ENCODE measurements at regions of chr11 and their contacts with region 1.

Region 1: GRCh38 chr11:72724851-72725730 is 27.1 kb downstream of the ARAP1 start:
- DNase-seq: peak; percentile 54 to 94 (median 75)
- ATAC-seq: peak in 3 of 4 experiments; percentile 17 to 27 (median 18)
- H3K4me3 ChIP-seq: no peak overlapping the region
- H3K4me3 Mint-ChIP-seq: peak overlapping the region in 2 of 3 donors; percentile 15 to 62
- H3K27ac ChIP-seq: peak overlapping the region; percentile 37
- H3K27ac Mint-ChIP-seq: peak overlapping the region; percentile 84 to 85
- H3K4me1 ChIP-seq: peaks cover 16 to 46% of the 10 kb centered on the region in 2 experiments
- H3K4me1 Mint-ChIP-seq: peaks cover 45 to 66% (median 46%) of the 10 kb centered on the region in 3 donors
- H3K27me3 ChIP-seq: no peaks in the 10 kb centered on the region
- H3K27me3 Mint-ChIP-seq: no peaks in the 10 kb centered on the region

Region 2: DNA sequence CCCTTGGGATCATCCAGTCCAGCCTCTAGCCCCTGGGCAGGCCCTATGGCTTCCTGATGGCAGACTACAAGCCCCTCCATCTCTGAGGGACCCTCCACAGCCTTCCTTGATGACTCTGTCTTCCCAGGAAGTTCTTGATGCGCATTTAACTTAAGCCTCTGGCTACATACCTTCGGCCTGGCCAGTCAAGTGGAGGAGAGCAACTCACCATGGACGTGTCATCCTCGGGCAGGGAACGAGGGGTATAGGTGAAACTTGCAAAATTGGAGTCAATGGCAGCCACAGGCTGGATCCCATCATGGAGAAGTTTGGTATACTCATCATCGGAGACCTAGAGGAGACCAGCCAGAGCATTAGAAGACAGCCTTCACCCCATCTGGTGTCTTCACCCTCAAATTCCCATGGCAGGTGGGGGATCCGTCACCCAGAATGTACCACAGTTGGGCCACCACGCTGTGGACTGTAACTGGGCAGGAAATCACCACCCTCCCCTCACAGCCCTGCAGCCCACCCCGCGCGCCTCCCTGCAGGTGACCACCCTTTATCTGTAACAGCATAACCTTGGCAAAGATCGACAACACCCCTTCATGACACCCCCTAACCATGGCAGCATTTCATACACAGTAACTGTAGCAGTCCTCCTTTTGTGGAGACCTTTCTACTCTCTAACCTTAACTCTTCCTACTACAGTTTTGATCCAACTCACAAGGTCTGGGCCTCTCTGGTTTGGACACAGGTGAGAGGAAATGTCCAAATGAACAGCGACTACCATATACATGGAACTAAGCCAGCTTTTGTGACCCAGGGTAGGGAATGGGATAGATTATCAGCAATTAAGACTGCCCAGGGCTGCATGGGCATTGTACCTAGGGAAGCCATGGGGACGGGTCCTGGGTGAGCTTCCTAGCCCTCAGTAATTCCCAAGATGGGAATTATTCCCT is 142.6 kb before region 1 on chr11:
- CTCF ChIA-PET with region 1: no interaction called
- POLR2A ChIA-PET with region 1: interaction called in 1 of 2 experiments, 10 read pairs
- DNase-seq: no peak
- ATAC-seq: no peak
- H3K4me3 ChIP-seq: no peak overlapping the region
- H3K4me3 Mint-ChIP-seq: peak overlapping the region in 1 of 3 donors; percentile 80
- H3K27ac ChIP-seq: no peak overlapping the region
- H3K27ac Mint-ChIP-seq: no peak overlapping the region
- H3K4me1 ChIP-seq: peaks cover 3 to 23% of the 10 kb centered on the region in 2 experiments
- H3K4me1 Mint-ChIP-seq: peaks cover 16 to 21% (median 19%) of the 10 kb centered on the region in 3 donors
- H3K27me3 ChIP-seq: peaks cover 0 to 29% of the 10 kb centered on the region in 2 experiments
- H3K27me3 Mint-ChIP-seq: peaks cover 6 to 10% of the 10 kb centered on the region in 2 donors

Region 3: GRCh38 chr11:72736452-72737069 is 11.5 kb after region 1 on chr11:
- CTCF ChIA-PET with region 1: interaction called in 1 of 2 experiments, 14 read pairs
- POLR2A ChIA-PET with region 1: no interaction called
- DNase-seq: peak; percentile 34 to 89 (median 79)
- ATAC-seq: peak; percentile 83 to 90 (median 88)
- H3K4me3 ChIP-seq: peak overlapping the region in 1 of 2 donors; percentile 12
- H3K4me3 Mint-ChIP-seq: peak overlapping the region; percentile 60 to 70 (median 68)
- H3K27ac ChIP-seq: peak overlapping the region; percentile 92
- H3K27ac Mint-ChIP-seq: peak overlapping the region; percentile 97 to 99
- H3K4me1 ChIP-seq: peaks cover 16 to 62% of the 10 kb centered on the region in 2 experiments
- H3K4me1 Mint-ChIP-seq: peaks cover 61 to 65% (median 61%) of the 10 kb centered on the region in 3 donors
- H3K27me3 ChIP-seq: no peaks in the 10 kb centered on the region
- H3K27me3 Mint-ChIP-seq: no peaks in the 10 kb centered on the region

Region 4: DNA sequence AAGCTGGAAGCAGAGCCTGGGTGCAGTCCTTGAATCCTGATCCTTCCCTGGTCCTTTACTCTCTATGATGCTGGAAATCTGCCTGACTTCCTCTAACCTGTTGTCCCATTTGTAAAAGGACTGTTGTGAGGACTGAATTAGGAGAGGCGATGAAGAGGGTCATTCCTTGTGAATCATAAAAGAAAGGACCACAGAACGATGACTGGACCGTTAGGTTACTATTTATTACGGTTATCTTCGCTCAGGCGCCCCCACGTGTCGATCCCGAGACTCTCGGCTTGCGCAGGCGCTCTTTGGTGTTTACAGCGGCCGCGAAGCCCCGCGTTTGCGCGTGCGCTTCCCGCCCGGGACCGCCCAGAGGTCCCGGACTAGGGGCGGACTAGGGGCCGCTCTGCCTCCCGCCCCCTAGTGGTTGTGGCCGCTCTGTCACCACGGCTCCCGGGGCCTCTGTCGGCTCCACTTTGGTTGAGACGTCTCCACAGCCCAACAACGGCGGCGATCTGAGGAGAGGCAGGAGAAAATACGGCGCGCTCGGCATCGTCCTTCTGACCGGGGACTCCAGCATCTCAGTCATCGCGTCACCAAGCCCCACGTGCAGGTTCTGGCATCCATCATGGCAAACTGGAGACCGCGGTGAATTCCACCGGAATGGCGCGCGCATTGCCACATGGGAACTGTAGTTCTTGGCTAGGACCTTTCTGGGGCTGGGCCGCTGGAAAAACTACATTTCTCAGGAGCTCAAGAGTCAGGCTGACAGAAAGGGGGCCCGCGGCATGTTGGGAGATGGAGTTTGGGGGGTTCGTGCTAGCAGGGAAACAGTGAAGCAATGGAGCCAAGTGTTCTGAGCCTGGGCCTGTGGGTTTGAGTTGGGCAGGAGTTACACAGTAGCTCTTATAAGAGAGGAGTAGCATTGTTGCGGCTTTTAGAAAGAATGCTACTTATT is 68.6 kb after region 1 on chr11 and contains the start of gene STARD10:
- CTCF ChIA-PET with region 1: interaction called, 15 to 38 read pairs
- POLR2A ChIA-PET with region 1: interaction called, 3 to 16 read pairs
- DNase-seq: peak; percentile 87 to 98 (median 93)
- ATAC-seq: peak; percentile 92 to 95 (median 94)
- H3K4me3 ChIP-seq: peak within 1 kb of the TSS; percentile 82 to 85
- H3K4me3 Mint-ChIP-seq: peak within 1 kb of the TSS; percentile 91 to 98 (median 97)
- H3K27ac ChIP-seq: peak within 1 kb of the TSS; percentile 99
- H3K27ac Mint-ChIP-seq: peak within 1 kb of the TSS; percentile 99 to 100
- H3K4me1 ChIP-seq: peaks cover 6 to 23% of the 10 kb centered on the region in 2 experiments
- H3K4me1 Mint-ChIP-seq: peaks cover 23 to 26% (median 26%) of the 10 kb centered on the region in 3 donors
- H3K27me3 ChIP-seq: no peaks in the 10 kb centered on the region
- H3K27me3 Mint-ChIP-seq: no peaks in the 10 kb centered on the region
- total RNA-seq, gene STARD10: 11.1 to 24.9 (median 19.1) TPM

Region 5: DNA sequence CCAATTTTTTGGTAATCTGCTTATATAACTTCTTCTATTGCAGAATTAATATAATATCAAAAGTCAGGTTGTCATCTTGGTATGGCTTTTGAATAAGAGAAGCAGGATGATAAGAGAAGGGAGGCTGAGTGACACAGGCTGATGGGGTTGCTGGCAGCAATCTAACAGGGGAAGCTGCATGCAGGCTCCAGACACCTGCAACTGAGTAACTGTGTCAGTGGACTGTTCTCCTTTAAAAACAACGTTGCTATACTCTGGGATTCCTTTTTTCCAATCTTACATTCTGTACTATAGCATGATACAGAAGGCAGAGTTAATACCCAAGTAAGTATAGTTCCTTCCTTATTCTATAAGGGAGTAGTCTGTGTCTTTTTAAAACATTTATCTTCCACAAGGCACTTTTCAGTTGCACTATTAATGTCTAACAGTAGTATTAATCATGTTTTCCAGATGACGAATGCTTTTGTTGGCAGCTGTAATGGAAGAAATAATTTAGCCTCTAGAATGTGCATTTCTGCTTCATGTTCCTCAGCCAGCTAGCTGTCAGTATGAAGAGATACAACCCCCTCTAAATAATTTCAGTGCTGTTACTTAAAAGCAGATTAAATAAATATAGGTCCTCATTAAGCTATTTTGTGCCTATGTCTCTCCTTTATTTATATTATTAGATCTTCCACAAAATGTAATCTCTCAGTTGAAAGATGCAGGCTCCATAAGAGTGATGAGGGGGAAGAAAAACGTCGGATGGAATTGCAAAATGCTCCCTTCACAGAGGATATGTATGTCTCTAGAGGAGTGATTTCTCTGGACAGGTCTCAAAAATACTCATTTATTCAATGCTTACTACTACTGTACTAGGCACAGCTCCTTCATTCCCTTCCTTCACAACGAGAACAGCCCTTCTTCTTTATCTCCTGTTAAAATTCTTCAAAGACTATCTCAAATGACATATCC is 139.9 kb after region 1 on chr11:
- CTCF ChIA-PET with region 1: no interaction called
- POLR2A ChIA-PET with region 1: no interaction called
- DNase-seq: no peak
- ATAC-seq: no peak
- H3K4me3 ChIP-seq: no peak overlapping the region
- H3K4me3 Mint-ChIP-seq: no peak overlapping the region
- H3K27ac ChIP-seq: no peak overlapping the region
- H3K27ac Mint-ChIP-seq: peak overlapping the region in 1 of 2 donors; percentile 40
- H3K4me1 ChIP-seq: peaks cover 3% of the 10 kb centered on the region in 2 experiments
- H3K4me1 Mint-ChIP-seq: peaks cover 8 to 17% (median 12%) of the 10 kb centered on the region in 3 donors
- H3K27me3 ChIP-seq: no peaks in the 10 kb centered on the region
- H3K27me3 Mint-ChIP-seq: no peaks in the 10 kb centered on the region

Region 6: DNA sequence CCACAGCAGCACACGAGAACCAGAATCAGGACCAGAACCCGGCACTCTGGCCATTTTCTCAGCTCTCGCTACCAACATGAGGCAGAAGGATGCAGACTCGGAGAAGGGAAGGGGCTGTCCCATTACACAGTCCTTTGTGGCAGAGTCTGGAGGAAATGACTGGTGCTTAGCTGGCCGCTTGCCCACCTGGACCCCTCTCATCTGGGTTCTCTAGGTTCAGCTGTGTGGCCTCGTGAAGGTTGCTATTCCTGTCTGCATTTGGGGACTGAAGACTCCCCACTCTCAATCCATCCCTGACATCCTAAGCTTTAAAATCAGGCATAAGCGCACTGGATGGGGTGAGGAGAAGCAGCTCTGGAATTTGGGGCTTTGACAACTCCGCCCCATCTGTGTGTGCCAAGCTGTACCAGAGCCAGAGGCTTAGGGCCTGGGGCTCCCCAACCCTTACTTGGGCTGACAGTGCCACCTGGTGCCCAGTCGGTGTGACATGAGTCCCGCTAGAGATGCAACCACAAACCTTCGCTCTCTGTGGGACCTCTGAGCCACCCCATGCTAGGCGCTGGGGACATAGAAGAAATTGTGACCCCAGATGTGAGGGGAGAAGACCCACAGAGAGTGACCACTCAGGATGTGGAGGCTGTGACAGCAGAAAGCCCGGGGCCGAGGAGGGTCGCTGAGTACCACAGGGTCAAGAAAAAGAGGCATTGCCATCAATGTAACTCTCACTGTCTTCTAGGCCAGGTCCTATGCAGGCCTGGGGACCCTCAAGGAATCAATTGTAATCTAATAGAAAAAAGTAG is 452.9 kb after region 1 on chr11:
- CTCF ChIA-PET with region 1: interaction called, 4 to 11 read pairs
- POLR2A ChIA-PET with region 1: no interaction called
- DNase-seq: peak; percentile 51 to 86 (median 75)
- ATAC-seq: peak; percentile 92 to 100 (median 98)
- H3K4me3 ChIP-seq: no peak overlapping the region
- H3K4me3 Mint-ChIP-seq: no peak overlapping the region
- H3K27ac ChIP-seq: no peak overlapping the region
- H3K27ac Mint-ChIP-seq: no peak overlapping the region
- H3K4me1 ChIP-seq: peaks cover 0 to 9% of the 10 kb centered on the region in 2 experiments
- H3K4me1 Mint-ChIP-seq: peaks cover 6 to 13% (median 12%) of the 10 kb centered on the region in 3 donors
- H3K27me3 ChIP-seq: peaks cover 0 to 13% of the 10 kb centered on the region in 2 experiments
- H3K27me3 Mint-ChIP-seq: peaks cover 0 to 3% of the 10 kb centered on the region in 2 donors

Measured in T-cell (primary cell).